CD8-positive, alpha-beta T cell (primary cell): ENCODE measurements at regions of chr1 and their contacts with region 1.

Region 1: DNA sequence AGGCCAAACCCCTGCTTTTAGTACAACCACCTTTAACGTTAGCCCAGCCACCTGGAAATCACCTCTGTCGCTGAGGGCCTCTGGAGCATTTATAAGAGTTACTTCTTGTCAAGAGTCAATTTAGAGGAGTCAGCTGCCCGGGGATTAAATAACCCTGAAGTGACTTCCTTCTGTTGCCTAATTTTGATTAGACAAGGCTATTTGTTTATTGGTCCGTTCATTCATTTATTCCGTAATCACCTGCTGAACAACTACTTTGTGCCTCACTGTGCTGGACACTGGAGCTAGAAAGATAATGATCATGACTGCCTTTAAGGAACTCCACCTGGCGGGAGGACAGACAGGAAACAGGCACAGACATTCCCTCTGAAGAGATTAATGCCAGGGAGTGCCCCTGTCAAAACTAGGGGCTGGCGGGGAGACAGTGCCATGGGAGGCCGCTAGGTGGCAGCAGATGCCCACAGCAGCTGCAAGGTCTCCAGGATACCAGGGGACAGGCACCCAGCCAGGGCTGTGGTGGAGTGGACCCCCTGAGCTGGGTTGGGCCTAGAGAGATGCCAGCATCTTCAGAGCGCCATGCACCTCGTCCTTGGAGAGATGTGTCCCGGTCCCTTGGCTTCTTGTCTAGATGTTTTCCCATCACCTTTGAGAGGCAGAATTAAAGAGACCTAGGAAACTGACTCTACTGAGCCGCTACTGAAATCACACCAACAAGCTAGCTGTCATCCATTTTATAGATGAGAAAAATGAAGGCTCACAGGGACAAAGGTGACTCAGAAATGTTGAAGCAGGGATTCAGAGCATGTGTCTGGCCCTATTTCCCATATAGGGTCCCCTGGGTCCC is 3.7 kb downstream of the REN start:
- DNase-seq: peak; percentile 61 to 87 (median 79)
- ATAC-seq: peak; percentile 99
- H3K4me3 ChIP-seq: no peak overlapping the region
- H3K4me3 Mint-ChIP-seq: no peak overlapping the region
- H3K27ac ChIP-seq: no peak overlapping the region
- H3K27ac Mint-ChIP-seq: no peak overlapping the region
- H3K4me1 ChIP-seq: no peaks in the 10 kb centered on the region
- H3K4me1 Mint-ChIP-seq: no peaks in the 10 kb centered on the region
- H3K27me3 ChIP-seq: no peaks in the 10 kb centered on the region
- H3K27me3 Mint-ChIP-seq: peaks cover 12% of the 10 kb centered on the region
- CTCF ChIP-seq: peak; percentile 98

Region 2: DNA sequence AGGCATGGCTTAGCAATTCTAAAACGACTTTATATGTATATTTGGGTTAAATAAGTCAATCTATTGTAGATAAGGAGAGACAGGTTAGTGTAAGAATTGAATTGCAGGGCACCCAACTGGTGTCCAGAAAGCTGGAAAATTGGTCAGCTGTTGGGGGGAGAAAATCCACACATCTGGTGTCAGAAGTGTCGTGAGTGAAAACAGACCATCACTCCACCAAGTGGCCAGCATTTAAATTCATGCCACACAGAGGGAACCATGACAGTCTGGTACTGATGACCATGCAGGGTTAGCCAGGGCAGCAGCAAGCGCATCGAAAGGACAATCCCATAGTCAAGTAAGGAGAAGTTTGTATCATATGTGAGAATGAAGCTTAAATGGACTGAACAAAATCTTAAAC is 385.8 kb before region 1 on chr1:
- CTCF ChIA-PET with region 1: no interaction called
- POLR2A ChIA-PET with region 1: no interaction called
- intact Hi-C with region 1: no loop called
- DNase-seq: peak in 1 of 9 experiments; percentile 36
- ATAC-seq: no peak
- H3K4me3 ChIP-seq: no peak overlapping the region
- H3K4me3 Mint-ChIP-seq: no peak overlapping the region
- H3K27ac ChIP-seq: no peak overlapping the region
- H3K27ac Mint-ChIP-seq: peak overlapping the region; percentile 72
- H3K4me1 ChIP-seq: no peaks in the 10 kb centered on the region
- H3K4me1 Mint-ChIP-seq: peaks cover 10% of the 10 kb centered on the region
- H3K27me3 ChIP-seq: no peaks in the 10 kb centered on the region
- H3K27me3 Mint-ChIP-seq: no peaks in the 10 kb centered on the region
- CTCF ChIP-seq: no peak

Region 3: DNA sequence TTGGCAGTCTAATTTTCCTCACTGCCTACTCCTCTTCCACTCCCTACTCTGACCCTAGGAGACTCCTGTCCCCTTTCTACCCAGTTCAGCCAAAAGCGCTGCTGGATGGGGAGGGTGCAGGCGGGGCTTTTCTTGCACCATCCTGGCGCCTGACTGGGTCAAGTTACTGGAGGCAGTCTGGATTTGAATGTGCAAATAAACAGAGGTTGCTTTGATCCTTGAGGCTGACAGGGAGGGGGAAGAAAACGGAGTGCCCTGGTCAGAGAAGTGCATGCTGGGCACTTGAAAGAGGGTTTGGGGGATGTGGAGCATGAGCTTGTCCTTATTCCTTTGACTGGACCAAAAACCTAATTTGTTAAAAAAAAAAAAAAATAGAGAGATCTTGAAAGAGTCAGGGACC is 166.3 kb before region 1 on chr1:
- CTCF ChIA-PET with region 1: no interaction called
- POLR2A ChIA-PET with region 1: no interaction called
- intact Hi-C with region 1: no loop called
- DNase-seq: no peak
- ATAC-seq: no peak
- H3K4me3 ChIP-seq: no peak overlapping the region
- H3K4me3 Mint-ChIP-seq: no peak overlapping the region
- H3K27ac ChIP-seq: no peak overlapping the region
- H3K27ac Mint-ChIP-seq: no peak overlapping the region
- H3K4me1 ChIP-seq: no peaks in the 10 kb centered on the region
- H3K4me1 Mint-ChIP-seq: peaks cover 5% of the 10 kb centered on the region
- H3K27me3 ChIP-seq: no peaks in the 10 kb centered on the region
- H3K27me3 Mint-ChIP-seq: peaks cover 20% of the 10 kb centered on the region
- CTCF ChIP-seq: no peak

Region 4: GRCh38 chr1:204151552-204152309 is 10.7 kb before region 1 on chr1 and contains the start of gene ETNK2:
- CTCF ChIA-PET with region 1: interaction called, 22 read pairs
- POLR2A ChIA-PET with region 1: no interaction called
- intact Hi-C with region 1: no loop called
- DNase-seq: peak; percentile 26 to 79 (median 59)
- ATAC-seq: peak; percentile 88
- H3K4me3 ChIP-seq: peak within 1 kb of the TSS; percentile 63 to 70
- H3K4me3 Mint-ChIP-seq: peak within 1 kb of the TSS; percentile 75
- H3K27ac ChIP-seq: peak within 1 kb of the TSS in 1 of 2 experiments; percentile 44
- H3K27ac Mint-ChIP-seq: peak within 1 kb of the TSS; percentile 77
- H3K4me1 ChIP-seq: peaks cover 13% of the 10 kb centered on the region
- H3K4me1 Mint-ChIP-seq: peaks cover 9% of the 10 kb centered on the region
- H3K27me3 ChIP-seq: no peaks in the 10 kb centered on the region
- H3K27me3 Mint-ChIP-seq: no peaks in the 10 kb centered on the region
- CTCF ChIP-seq: no peak
- total RNA-seq, gene ETNK2: 13.4 to 17.0 TPM

Region 5: GRCh38 chr1:204188982-204189646 is 26.7 kb after region 1 on chr1:
- CTCF ChIA-PET with region 1: interaction called, 13 read pairs
- POLR2A ChIA-PET with region 1: no interaction called
- intact Hi-C with region 1: no loop called
- DNase-seq: peak in 3 of 9 experiments; percentile 23 to 61 (median 40)
- ATAC-seq: peak; percentile 36
- H3K4me3 ChIP-seq: no peak overlapping the region
- H3K4me3 Mint-ChIP-seq: no peak overlapping the region
- H3K27ac ChIP-seq: no peak overlapping the region
- H3K27ac Mint-ChIP-seq: peak overlapping the region; percentile 10
- H3K4me1 ChIP-seq: no peaks in the 10 kb centered on the region
- H3K4me1 Mint-ChIP-seq: peaks cover 24% of the 10 kb centered on the region
- H3K27me3 ChIP-seq: peaks cover 3 to 4% of the 10 kb centered on the region in 2 experiments
- H3K27me3 Mint-ChIP-seq: peaks cover 45% of the 10 kb centered on the region
- CTCF ChIP-seq: no peak

Region 6: GRCh38 chr1:204207136-204207616 is 44.7 kb after region 1 on chr1:
- CTCF ChIA-PET with region 1: interaction called, 91 read pairs
- POLR2A ChIA-PET with region 1: no interaction called
- intact Hi-C with region 1: loop called (anchors 1 to 2 kb)
- DNase-seq: peak; percentile 56 to 84 (median 72)
- ATAC-seq: peak; percentile 96
- H3K4me3 ChIP-seq: no peak overlapping the region
- H3K4me3 Mint-ChIP-seq: no peak overlapping the region
- H3K27ac ChIP-seq: no peak overlapping the region
- H3K27ac Mint-ChIP-seq: no peak overlapping the region
- H3K4me1 ChIP-seq: peaks cover 12% of the 10 kb centered on the region
- H3K4me1 Mint-ChIP-seq: peaks cover 11% of the 10 kb centered on the region
- H3K27me3 ChIP-seq: no peaks in the 10 kb centered on the region
- H3K27me3 Mint-ChIP-seq: peaks cover 29% of the 10 kb centered on the region
- CTCF ChIP-seq: peak; percentile 73

Region 7: GRCh38 chr1:204368996-204369726 is 206.7 kb after region 1 on chr1:
- CTCF ChIA-PET with region 1: interaction called, 210 read pairs
- POLR2A ChIA-PET with region 1: no interaction called
- intact Hi-C with region 1: no loop called
- DNase-seq: no peak
- ATAC-seq: no peak
- H3K4me3 ChIP-seq: no peak overlapping the region
- H3K4me3 Mint-ChIP-seq: no peak overlapping the region
- H3K27ac ChIP-seq: no peak overlapping the region
- H3K27ac Mint-ChIP-seq: no peak overlapping the region
- H3K4me1 ChIP-seq: peaks cover under 1% of the 10 kb centered on the region
- H3K4me1 Mint-ChIP-seq: peaks cover 5% of the 10 kb centered on the region
- H3K27me3 ChIP-seq: no peaks in the 10 kb centered on the region
- H3K27me3 Mint-ChIP-seq: no peaks in the 10 kb centered on the region
- CTCF ChIP-seq: no peak

Region 8: DNA sequence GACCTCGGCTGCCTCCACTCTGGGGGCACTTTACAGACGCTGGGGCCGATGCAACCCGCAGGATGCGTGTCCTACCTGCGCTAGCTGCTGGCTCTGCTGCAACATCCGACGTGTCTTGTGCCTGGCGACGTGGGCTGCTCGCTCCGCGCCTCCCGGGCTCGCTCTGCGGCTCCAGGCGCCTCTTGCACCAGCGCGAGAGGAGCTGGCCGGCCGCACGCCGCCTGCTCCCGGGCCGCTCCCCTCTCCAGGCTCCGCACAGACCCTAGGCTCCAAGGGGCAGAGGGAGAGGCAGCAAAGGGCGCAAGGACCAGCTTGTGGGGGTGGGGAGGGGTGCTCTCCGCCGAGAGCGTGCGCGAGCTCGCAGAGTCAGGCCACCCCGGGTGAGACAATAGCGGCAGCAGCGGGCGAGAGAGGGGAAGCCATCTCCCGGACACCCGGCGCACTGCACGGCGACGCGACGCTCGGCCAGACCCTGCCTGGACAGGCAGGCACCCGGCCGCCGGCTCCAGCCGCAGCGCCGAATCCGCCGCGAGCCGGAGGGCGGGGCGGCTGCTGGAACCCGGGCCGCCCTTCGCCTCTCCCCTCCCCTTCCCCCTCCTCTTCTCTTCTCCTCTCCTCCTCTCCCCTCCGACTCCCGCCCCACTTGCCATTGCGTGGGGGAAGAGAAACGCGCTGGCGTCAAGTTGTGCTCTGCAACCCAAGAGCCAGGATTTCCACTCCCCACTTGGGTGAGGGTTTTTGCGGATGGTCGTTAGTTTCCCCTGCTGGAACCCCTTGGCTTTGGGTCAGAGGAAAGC is 332.0 kb after region 1 on chr1 and contains the start of gene PIK3C2B:
- CTCF ChIA-PET with region 1: interaction called, 3 read pairs
- POLR2A ChIA-PET with region 1: no interaction called
- intact Hi-C with region 1: loop called in 1 of 2 experiments (anchors 10 kb)
- DNase-seq: peak; percentile 29 to 86 (median 69)
- ATAC-seq: peak; percentile 69
- H3K4me3 ChIP-seq: peak within 1 kb of the TSS; percentile 64 to 86
- H3K4me3 Mint-ChIP-seq: peak within 1 kb of the TSS; percentile 94
- H3K27ac ChIP-seq: peak within 1 kb of the TSS; percentile 63 to 72
- H3K27ac Mint-ChIP-seq: peak within 1 kb of the TSS; percentile 96
- H3K4me1 ChIP-seq: peaks cover 29% of the 10 kb centered on the region
- H3K4me1 Mint-ChIP-seq: peaks cover 52% of the 10 kb centered on the region
- H3K27me3 ChIP-seq: no peaks in the 10 kb centered on the region
- H3K27me3 Mint-ChIP-seq: no peaks in the 10 kb centered on the region
- CTCF ChIP-seq: no peak
- total RNA-seq, gene PIK3C2B: 32.2 to 32.6 TPM